Calu3 (cell line): ENCODE measurements at regions of chr16 and their contacts with region 1.

Region 1: DNA sequence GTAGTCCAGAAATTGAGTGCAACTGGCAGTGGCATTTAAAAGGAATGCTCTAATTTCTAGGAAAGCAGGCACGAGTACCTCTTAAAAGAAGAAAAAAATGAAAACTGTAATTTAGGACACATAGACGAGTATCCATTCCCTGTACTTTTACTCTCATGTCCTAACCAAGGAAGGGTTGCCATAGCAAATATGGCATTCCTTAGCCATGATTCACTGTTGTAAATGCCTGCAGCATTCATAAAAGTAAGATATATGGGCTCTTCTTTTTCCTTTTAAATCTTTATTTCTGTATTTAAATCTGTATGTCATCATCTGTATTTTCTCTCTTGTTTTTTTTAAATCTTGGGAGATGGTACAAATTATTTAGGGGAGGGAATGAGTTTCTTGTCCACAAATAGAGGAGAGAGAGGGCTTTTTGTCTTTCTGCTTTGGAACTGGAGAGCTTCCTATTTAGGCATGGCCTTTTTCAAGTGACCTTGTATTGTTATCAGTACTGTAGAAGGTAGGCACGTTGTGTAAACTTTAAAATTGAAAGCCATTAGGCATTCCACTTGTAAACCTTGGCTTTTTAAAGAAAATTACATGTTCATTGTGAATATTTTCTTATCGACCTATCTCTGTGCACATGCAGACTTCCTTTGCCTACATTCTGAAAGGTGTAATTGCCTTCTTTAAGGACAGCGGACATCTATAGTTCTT is 50.0 kb downstream of the TENT4B start:
- DNase-seq: peak; percentile 55
- H3K4me3 Mint-ChIP-seq: peak overlapping the region; percentile 18
- H3K27ac Mint-ChIP-seq: peak overlapping the region; percentile 91
- H3K4me1 Mint-ChIP-seq: peaks cover 49% of the 10 kb centered on the region
- H3K27me3 Mint-ChIP-seq: no peaks in the 10 kb centered on the region
- CTCF ChIP-seq: no peak

Region 2: DNA sequence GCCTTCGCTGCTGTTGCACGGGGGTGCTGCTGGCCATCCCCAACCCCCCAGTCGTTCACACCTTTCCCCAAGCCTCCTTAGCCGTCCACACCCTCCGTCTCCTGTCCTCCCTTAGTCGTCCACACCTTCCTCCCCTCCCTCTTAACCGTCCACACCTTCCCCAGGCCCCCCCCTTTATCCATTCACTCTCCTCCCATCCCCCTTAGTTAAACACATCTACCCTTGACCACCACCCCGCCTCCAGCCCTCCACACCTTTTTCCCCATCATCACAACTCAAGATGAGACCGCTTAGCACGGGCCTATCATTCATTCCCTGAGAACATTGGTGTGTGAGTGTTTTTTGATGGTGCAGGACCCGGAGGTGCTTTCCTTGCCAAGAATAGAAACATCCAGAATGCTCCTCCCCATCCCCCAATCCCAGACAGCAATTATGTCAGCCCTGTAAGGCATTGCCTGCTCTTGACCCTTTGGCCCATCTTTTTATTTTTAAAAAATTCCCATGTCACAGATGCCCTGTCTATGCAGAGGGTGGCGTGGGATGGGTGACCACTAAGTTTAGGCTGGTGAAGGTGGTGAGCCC is 48.6 kb before region 1 on chr16:
- CTCF ChIA-PET with region 1: no interaction called
- intact Hi-C with region 1: loop called (anchors 5 kb)
- DNase-seq: no peak
- H3K4me3 Mint-ChIP-seq: peak overlapping the region; percentile 80
- H3K27ac Mint-ChIP-seq: peak overlapping the region; percentile 42
- H3K4me1 Mint-ChIP-seq: peaks cover 43% of the 10 kb centered on the region
- H3K27me3 Mint-ChIP-seq: no peaks in the 10 kb centered on the region
- CTCF ChIP-seq: no peak

Region 3: GRCh38 chr16:50185005-50185505 is 18.0 kb before region 1 on chr16:
- CTCF ChIA-PET with region 1: interaction called, 7 read pairs
- intact Hi-C with region 1: loop called (anchors 2 kb)
- DNase-seq: peak; percentile 49
- H3K4me3 Mint-ChIP-seq: peak overlapping the region; percentile 71
- H3K27ac Mint-ChIP-seq: peak overlapping the region; percentile 59
- H3K4me1 Mint-ChIP-seq: peaks cover 43% of the 10 kb centered on the region
- H3K27me3 Mint-ChIP-seq: no peaks in the 10 kb centered on the region
- CTCF ChIP-seq: no peak